Activated naive CD4-positive, alpha-beta T cell treated with anti-CD3 and anti-CD28 coated beads for 36 hours (primary cell): ENCODE measurements at regions of chr17 and their contacts with region 1.

Region 1: DNA sequence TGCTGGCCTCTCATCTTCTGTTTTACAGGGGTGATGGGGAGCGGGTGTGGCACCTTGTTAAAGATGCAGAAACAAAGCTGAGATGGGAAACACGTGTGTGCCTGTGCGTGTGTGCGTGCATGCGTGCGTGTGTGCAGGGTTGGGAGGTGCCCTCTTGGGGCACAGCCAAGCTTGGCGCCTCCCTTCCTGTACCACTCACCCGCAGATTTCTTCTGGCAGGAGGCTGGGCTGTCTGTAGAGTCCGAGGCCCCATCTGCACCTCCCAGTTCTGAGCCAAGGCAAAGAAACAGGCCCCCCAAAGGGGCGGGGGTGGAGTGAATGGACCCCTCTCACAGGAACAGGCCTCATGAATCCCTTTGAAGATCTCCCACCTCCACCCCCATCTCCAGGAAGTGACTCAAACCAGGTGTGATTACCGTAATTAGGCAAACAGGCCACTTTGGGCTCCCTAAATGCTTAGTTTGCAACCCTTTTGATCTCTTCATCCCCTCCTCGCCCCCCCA is 20.9 kb downstream of the TNS4 start:
- DNase-seq: peak; percentile 95
- H3K4me3 Mint-ChIP-seq: peak overlapping the region; percentile 67
- H3K27ac Mint-ChIP-seq: peak overlapping the region; percentile 94
- H3K4me1 Mint-ChIP-seq: peaks cover 60% of the 10 kb centered on the region
- H3K27me3 Mint-ChIP-seq: no peaks in the 10 kb centered on the region

Region 2: GRCh38 chr17:40362696-40363110 is 117.8 kb before region 1 on chr17:
- CTCF ChIA-PET with region 1: interaction called, 3 read pairs
- intact Hi-C with region 1: loop called (anchors 1 kb)
- DNase-seq: peak; percentile 95
- H3K4me3 Mint-ChIP-seq: peak overlapping the region; percentile 76
- H3K27ac Mint-ChIP-seq: no peak overlapping the region
- H3K4me1 Mint-ChIP-seq: peaks cover 12% of the 10 kb centered on the region
- H3K27me3 Mint-ChIP-seq: peaks cover 12% of the 10 kb centered on the region

Region 3: DNA sequence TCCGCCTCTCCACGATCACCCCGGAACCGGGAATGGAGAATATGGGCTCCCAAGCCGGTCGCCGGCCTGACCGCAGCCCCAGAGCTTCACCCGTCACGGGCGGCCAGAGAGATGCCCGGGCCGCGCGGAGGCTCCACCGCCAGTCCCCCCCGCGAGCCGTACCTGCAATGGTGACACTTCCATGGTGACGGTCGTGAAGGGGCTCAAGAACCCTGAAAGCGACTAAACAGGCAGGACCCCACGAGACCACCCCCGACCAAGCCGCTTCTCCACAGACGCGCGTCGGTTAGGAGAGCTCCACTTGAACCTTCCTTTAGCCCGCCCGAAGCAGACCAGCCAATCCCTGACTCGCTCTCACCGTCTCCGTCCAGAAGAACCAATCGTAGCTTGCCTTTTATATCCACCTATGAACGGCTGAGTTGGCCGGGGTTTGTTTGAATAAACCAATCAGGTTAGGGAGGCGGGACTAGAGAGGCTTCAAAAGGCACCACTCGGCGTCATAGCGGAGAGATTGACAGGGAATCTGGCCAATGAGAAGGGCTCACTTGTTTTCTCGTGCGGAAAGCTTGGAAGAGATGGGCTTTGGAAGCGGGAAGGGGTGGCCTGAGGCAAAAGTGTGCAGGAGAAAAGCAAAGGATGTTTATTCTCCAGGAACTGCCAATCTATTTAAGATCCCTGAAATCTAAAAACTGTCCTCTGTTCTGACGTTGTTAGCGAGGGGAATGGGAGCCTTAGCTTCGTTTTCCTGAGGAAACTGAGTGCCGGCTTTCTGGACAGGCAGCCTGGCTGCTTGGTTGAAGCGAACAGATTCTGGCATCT is 62.7 kb before region 1 on chr17 and contains the start of gene TOP2A:
- CTCF ChIA-PET with region 1: interaction called, 19 read pairs
- intact Hi-C with region 1: loop called (anchors 2 kb)
- DNase-seq: peak; percentile 99
- H3K4me3 Mint-ChIP-seq: peak within 1 kb of the TSS; percentile 98
- H3K27ac Mint-ChIP-seq: peak within 1 kb of the TSS; percentile 90
- H3K4me1 Mint-ChIP-seq: peaks cover 26% of the 10 kb centered on the region
- H3K27me3 Mint-ChIP-seq: peaks cover 2% of the 10 kb centered on the region
- total RNA-seq, gene TOP2A: 410 to 416 TPM

Region 4: DNA sequence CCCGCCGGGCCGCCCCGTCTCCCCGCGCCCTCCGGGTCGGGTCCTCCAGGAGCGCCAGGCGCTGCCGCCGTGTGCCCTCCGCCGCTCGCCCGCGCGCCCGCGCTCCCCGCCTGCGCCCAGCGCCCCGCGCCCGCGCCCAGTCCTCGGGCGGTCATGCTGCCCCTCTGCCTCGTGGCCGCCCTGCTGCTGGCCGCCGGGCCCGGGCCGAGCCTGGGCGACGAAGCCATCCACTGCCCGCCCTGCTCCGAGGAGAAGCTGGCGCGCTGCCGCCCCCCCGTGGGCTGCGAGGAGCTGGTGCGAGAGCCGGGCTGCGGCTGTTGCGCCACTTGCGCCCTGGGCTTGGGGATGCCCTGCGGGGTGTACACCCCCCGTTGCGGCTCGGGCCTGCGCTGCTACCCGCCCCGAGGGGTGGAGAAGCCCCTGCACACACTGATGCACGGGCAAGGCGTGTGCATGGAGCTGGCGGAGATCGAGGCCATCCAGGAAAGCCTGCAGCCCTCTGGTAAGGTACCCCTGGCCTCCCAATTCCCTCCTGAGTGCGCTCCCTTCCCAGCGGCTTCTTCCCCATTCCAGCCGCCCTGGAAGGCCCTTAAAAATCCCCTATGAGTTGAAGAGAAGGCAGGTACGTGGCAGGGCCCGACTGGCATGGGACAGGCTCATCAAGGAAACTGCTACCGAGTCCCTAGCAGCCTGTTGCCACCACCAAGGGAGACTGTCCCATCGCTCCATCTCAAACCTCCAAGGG is 36.8 kb before region 1 on chr17:
- CTCF ChIA-PET with region 1: interaction called, 18 read pairs
- intact Hi-C with region 1: loop called (anchors 1 kb)
- DNase-seq: peak; percentile 74
- H3K4me3 Mint-ChIP-seq: peak overlapping the region; percentile 78
- H3K27ac Mint-ChIP-seq: peak overlapping the region; percentile 76
- H3K4me1 Mint-ChIP-seq: peaks cover 29% of the 10 kb centered on the region
- H3K27me3 Mint-ChIP-seq: peaks cover 4% of the 10 kb centered on the region

Region 5: GRCh38 chr17:40516581-40517285 is 36.2 kb after region 1 on chr17:
- CTCF ChIA-PET with region 1: interaction called, 3 read pairs
- intact Hi-C with region 1: loop called (anchors 1 kb)
- DNase-seq: peak; percentile 88
- H3K4me3 Mint-ChIP-seq: peak overlapping the region; percentile 64
- H3K27ac Mint-ChIP-seq: peak overlapping the region; percentile 82
- H3K4me1 Mint-ChIP-seq: peaks cover 48% of the 10 kb centered on the region
- H3K27me3 Mint-ChIP-seq: peaks cover 3% of the 10 kb centered on the region

Region 6: DNA sequence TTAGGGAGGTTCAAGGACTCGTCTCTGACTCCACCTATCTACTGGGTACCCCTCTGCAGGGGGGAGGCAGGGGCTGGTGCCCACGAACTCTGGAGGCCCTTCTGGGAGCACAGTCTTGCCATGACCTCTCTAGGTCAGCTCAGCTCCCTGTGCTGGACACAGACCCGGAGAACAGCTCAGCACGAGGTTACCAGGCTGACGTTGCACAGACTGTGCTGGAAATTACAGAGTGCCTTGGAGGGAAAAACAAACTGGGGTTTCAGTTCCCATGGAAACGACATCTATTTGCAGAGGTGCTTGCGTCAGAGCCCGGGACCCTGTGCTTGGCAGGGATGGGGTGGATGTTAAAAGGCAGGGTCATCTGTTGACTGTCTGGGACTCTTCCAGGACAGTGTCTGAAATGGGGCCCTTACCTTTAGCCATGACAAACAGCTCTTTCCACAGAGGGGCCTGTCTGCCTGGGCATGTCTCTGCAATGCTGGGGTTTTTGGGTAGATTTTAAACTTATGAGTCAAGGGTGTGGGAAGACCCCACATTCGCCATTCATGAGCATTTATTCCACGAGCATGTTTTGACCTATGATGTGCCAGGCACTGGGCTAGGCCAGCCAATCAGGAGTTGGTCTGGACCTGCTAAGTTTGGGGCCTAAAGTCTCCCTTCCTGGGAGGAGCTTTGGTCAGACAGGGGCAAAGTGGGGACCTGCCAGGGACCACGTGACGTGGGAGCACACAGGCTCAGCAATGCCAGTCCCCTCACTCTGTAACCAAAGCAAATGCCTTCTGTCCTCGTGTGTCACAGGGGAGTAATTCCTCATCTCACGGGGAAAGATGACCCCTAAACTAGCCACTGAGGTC is 62.2 kb after region 1 on chr17:
- CTCF ChIA-PET with region 1: interaction called, 9 read pairs
- intact Hi-C with region 1: loop called (anchors 1 kb)
- DNase-seq: peak; percentile 89
- H3K4me3 Mint-ChIP-seq: peak overlapping the region; percentile 66
- H3K27ac Mint-ChIP-seq: peak overlapping the region; percentile 96
- H3K4me1 Mint-ChIP-seq: peaks cover 83% of the 10 kb centered on the region
- H3K27me3 Mint-ChIP-seq: no peaks in the 10 kb centered on the region

Region 7: DNA sequence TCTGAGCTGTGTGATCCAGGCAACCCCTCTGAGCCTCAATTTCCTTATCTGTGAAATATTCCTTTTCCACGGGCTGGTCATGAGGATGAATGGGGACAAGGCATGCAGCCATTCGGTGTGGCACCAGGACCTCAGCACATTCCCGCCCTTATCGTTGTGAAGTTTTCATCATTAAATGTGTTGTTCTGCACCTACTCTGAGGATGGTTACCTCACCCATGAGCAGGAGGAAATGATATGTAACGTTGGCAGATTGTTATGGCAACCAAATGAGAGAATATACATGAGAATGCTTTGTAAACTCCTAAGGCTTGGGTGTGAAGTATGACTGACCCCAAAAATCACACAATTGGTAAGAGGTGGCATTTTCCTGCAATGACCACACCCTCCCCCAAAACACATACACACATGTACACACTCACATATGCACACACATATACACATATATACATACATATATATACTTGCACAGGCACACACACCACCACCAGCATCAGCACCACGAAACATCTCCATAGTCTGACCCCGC is 127.6 kb after region 1 on chr17:
- CTCF ChIA-PET with region 1: no interaction called
- intact Hi-C with region 1: loop called (anchors 2 kb)
- DNase-seq: peak; percentile 64
- H3K4me3 Mint-ChIP-seq: peak overlapping the region; percentile 38
- H3K27ac Mint-ChIP-seq: peak overlapping the region; percentile 73
- H3K4me1 Mint-ChIP-seq: peaks cover 95% of the 10 kb centered on the region
- H3K27me3 Mint-ChIP-seq: no peaks in the 10 kb centered on the region

Region 8: DNA sequence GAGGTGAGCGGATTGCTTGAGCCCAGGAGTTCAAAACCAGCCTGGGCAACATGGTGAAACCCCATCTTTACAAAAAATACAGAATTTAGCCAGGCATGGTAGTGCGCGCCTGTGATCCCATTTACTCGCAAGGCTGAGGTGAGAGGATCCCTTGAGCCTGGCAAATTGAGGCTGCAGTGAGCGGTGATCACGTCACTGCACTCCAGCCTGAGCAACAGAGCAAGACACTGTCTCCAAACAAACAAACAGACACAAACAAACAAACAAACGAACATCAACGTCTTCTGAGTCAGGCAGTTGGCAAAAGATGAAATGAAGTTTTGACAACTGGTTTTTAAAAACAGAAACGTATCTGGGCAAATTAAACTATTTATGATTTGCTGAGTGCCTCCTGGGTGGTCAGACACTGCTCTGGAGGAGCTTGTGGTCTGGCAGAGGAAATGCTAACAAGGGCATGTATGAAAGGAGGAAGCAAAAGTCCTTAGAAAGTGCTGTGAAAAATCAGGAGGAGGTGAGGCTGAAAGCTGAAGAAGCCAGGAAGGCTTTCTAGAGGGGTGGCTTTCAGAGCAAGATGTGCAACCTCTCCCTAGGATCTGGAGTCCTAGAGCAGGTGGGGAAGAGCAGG is 414.7 kb after region 1 on chr17:
- CTCF ChIA-PET with region 1: no interaction called
- intact Hi-C with region 1: no loop called
- DNase-seq: no peak
- H3K4me3 Mint-ChIP-seq: no peak overlapping the region
- H3K27ac Mint-ChIP-seq: no peak overlapping the region
- H3K4me1 Mint-ChIP-seq: no peaks in the 10 kb centered on the region
- H3K27me3 Mint-ChIP-seq: peaks cover 13% of the 10 kb centered on the region

Region 9: DNA sequence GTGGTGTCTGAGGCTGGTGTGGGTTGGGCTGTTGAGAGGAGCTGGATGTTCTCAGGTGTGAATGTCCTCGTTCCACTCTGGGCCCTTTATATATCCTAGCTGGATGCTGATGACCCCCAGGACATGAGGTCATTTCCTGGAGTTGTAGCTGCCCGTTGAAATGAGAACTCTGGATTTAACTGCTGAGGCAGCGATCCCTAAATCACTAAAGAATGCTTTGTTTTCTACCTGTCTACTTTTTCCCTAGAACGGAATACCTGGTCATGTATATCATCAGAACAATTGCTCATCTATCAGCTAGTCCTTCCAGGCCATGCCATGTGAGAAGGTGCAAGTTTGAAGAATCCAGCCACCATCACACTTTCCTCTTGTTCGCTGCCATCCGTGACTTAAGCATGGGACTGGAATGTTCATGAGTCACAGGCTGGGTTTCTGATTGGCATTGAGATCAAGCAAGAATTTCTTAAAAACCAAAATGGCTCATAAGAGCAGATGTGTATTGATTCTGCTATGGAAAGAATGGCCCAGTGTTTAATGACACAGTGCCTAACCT is 579.6 kb after region 1 on chr17 and contains the start of gene KRTAP2-3:
- CTCF ChIA-PET with region 1: no interaction called
- intact Hi-C with region 1: no loop called
- DNase-seq: no peak
- H3K4me3 Mint-ChIP-seq: no peak within 1 kb of the TSS
- H3K27ac Mint-ChIP-seq: no peak within 1 kb of the TSS
- H3K4me1 Mint-ChIP-seq: no peaks in the 10 kb centered on the region
- H3K27me3 Mint-ChIP-seq: peaks cover 28% of the 10 kb centered on the region
- total RNA-seq, gene KRTAP2-3: not detected